Activated naive CD4-positive, alpha-beta T cell treated with anti-CD3 and anti-CD28 coated beads, Interleukin-2, amount 10 ng/mL, durations not matched to agents 7 days and 5 days (primary cell): ENCODE measurements at regions of chr11 and their contacts with region 1.

Region 1: DNA sequence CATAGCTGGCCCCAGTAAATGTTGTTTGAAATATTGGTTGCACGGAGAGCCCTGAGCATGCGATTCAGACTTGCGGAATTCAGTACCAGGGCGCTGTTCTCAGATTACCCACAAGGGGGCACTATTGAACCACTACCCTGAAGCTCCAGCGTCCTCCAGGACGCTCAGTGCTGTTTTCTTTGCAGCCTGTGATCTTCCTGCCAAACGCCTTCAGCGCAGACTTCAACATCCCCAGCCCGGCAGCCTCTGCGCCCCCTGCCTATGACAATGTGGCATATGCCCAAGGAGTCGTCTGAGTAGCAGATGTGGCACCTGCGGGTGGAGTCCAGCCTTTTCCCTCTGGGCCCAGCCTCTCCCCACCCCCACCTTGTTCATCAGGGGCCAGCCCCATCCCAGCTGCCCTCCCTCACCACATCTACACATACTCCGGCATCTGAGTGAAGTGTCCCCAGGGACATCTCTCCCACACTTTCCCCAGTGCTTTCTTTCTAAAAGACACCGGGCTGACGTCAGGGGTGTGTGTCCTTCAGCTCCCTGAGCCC is 9.6 kb upstream of the MS4A10 start:
- DNase-seq: peak; percentile 90
- H3K4me3 Mint-ChIP-seq: no peak overlapping the region
- H3K27ac Mint-ChIP-seq: peak overlapping the region; percentile 58
- H3K4me1 Mint-ChIP-seq: peaks cover 7% of the 10 kb centered on the region
- H3K27me3 Mint-ChIP-seq: peaks cover 33% of the 10 kb centered on the region

Region 2: DNA sequence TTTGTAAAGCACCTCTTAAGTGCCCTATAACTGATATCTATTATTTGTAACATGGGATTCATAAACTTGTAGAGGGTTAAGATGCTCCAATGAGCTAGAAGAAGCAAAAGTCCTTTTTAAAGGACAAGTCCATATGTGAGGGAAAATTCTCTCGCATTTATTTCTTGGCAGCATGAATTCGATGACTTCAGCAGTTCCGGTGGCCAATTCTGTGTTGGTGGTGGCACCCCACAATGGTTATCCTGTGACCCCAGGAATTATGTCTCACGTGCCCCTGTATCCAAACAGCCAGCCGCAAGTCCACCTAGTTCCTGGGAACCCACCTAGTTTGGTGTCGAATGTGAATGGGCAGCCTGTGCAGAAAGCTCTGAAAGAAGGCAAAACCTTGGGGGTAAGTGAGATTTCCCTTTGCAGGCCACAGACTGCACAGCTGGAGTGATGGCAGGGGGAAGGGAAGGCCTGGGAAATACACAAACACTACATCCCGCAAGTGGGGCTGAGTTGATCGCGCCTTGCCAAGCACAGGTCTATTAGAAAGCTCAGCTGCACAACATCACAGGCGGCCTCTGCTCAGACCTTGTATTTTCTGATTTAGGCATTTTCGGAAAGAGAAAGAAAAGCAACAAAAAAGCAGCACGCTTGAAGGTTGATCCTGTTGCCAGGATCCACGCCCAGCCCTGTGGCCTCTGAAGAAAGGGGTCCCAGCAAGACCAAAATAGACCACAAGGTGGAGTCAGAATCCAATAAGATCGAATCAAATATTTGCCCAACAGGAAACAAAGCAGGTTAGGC is 74.6 kb before region 1 on chr11:
- CTCF ChIA-PET with region 1: no interaction called
- DNase-seq: no peak
- H3K4me3 Mint-ChIP-seq: no peak overlapping the region
- H3K27ac Mint-ChIP-seq: no peak overlapping the region
- H3K4me1 Mint-ChIP-seq: no peaks in the 10 kb centered on the region
- H3K27me3 Mint-ChIP-seq: peaks cover 5% of the 10 kb centered on the region

Region 3: GRCh38 chr11:60762851-60763691 is 12.4 kb before region 1 on chr11:
- CTCF ChIA-PET with region 1: interaction called, 16 read pairs
- DNase-seq: no peak
- H3K4me3 Mint-ChIP-seq: no peak overlapping the region
- H3K27ac Mint-ChIP-seq: no peak overlapping the region
- H3K4me1 Mint-ChIP-seq: no peaks in the 10 kb centered on the region
- H3K27me3 Mint-ChIP-seq: peaks cover 34% of the 10 kb centered on the region

Region 4: GRCh38 chr11:60899046-60899936 is 123.8 kb after region 1 on chr11:
- CTCF ChIA-PET with region 1: interaction called, 10 read pairs
- DNase-seq: peak; percentile 45
- H3K4me3 Mint-ChIP-seq: no peak overlapping the region
- H3K27ac Mint-ChIP-seq: peak overlapping the region; percentile 15
- H3K4me1 Mint-ChIP-seq: peaks cover 7% of the 10 kb centered on the region
- H3K27me3 Mint-ChIP-seq: no peaks in the 10 kb centered on the region